Heart right ventricle (tissue), 16 donors: ENCODE measurements at regions of chr12 and their contacts with region 1.

Region 1: DNA sequence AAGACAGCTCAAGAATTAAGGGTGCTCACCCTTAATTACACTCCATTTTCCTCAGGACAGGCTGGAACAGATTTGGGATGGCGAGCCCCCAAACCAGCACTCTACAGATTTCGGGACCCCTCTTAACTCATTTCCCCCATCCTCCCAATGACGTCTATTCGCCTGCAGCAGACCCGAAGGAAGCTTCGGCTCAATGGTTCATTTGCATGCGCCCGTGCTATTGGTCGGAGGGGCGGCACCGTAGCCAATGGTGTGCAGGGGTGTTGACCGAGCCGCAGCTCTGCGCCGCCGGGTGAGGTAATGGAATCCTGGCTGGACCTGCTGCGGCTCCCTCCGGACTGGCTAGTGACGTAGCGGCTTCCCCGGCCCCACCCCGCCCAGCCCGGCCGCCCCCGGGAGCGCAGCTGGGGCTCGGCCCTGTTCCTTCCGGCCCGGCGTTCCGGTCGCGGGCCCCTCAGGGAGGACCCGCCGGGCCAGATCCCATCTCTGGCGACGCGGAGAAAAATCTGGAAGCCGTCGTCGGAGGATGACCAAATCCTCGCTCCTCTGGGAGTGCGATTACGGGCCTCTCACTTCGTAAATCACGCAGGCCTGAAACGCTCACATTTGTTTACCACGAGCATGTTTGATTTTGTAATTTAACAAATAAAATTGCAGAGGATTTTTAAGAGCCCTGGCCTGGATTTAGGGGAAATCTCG is 18.3 kb upstream of the NR4A1 start:
- DNase-seq: peak; percentile 97 to 99
- ATAC-seq: peak; percentile 90 to 95 (median 93)
- H3K4me3 ChIP-seq: peak overlapping the region in 9 of 10 donors; percentile 14 to 52 (median 36)
- H3K27ac ChIP-seq: peak overlapping the region; percentile 84 to 95 (median 89)
- H3K4me1 ChIP-seq: peaks cover 24 to 70% (median 49%) of the 10 kb centered on the region in 9 donors
- H3K27me3 ChIP-seq: peaks cover 0 to 5% (median 0%) of the 10 kb centered on the region in 7 donors
- CTCF ChIP-seq: no peak

Region 2: GRCh38 chr12:51759175-51759574 is 273.8 kb before region 1 on chr12:
- intact Hi-C with region 1: no loop called
- DNase-seq: no peak
- ATAC-seq: no peak
- H3K4me3 ChIP-seq: no peak overlapping the region
- H3K27ac ChIP-seq: no peak overlapping the region
- H3K4me1 ChIP-seq: no peaks in the 10 kb centered on the region
- H3K27me3 ChIP-seq: no peaks in the 10 kb centered on the region
- CTCF ChIP-seq: no peak

Region 3: GRCh38 chr12:51913071-51913480 is 119.9 kb before region 1 on chr12:
- intact Hi-C with region 1: no loop called
- DNase-seq: no peak
- ATAC-seq: no peak
- H3K4me3 ChIP-seq: peak overlapping the region in 6 of 10 donors; percentile 23 to 47 (median 40)
- H3K27ac ChIP-seq: peak overlapping the region in 8 of 10 donors; percentile 46 to 98 (median 88)
- H3K4me1 ChIP-seq: peaks cover 20 to 91% (median 65%) of the 10 kb centered on the region in 9 donors
- H3K27me3 ChIP-seq: peaks cover 0 to 7% (median 0%) of the 10 kb centered on the region in 7 donors
- CTCF ChIP-seq: peak in 2 of 9 donors; percentile 5 to 13

Region 4: GRCh38 chr12:52050761-52051541 is 18.0 kb after region 1 on chr12 and contains the start of gene NR4A1:
- intact Hi-C with region 1: loop called in 3 of 10 experiments (anchors 2 kb)
- DNase-seq: peak; percentile 99
- ATAC-seq: peak; percentile 70 to 92 (median 86)
- H3K4me3 ChIP-seq: peak within 1 kb of the TSS; percentile 38 to 77 (median 66)
- H3K27ac ChIP-seq: peak within 1 kb of the TSS; percentile 88 to 98 (median 96)
- H3K4me1 ChIP-seq: peaks cover 31 to 87% (median 60%) of the 10 kb centered on the region in 9 donors
- H3K27me3 ChIP-seq: peaks cover 0 to 5% (median 0%) of the 10 kb centered on the region in 7 donors
- CTCF ChIP-seq: peak in 8 of 9 donors; percentile 9 to 69 (median 34)
- total RNA-seq, gene NR4A1: 34.6 to 588 (median 105) TPM

Region 5: DNA sequence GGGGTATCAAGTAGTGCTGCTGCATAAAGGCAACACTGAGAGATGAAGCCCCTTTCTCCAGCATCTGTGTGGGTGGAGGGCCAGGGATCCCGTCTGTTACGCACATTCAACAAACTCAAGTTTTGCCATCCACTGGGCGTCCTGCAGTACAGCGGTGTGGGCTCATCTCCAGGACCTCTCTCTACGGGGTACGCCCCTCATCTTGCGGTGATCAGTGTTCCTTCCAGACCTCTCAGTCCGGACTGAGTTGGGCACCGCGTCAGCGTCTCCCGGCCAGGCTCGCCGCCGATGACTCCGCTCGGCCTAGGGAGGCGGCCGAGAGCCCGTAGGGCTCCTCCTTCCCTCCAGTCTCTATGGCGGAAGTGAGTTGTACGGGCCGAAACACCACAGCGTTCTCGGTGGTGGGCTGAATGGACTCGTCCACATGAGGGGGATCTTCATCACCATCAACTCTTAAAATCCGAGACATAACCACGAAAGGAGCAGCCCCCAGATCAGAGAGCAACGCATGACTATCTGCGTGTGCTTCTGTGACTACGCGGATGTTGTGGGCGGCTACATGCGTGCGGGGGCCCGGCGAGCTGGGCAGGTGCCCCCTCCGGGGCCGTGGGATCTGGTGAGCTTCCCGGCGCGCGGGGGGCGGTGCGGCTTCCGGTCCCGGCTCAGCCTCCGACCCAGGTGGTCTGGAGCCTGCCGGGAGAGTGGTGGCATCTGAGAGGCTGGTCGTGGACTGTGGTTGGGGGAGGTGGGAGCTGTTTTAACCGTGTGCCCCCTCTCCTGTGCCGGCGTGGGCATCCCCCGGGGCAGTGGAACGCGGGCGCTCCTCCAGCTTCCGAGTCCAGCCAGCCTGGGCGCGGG is 36.6 kb after region 1 on chr12 and contains the start of gene ATG101:
- intact Hi-C with region 1: loop called in 3 of 10 experiments (anchors 2 to 5 kb)
- DNase-seq: peak; percentile 88 to 93
- ATAC-seq: peak; percentile 96 to 98 (median 97)
- H3K4me3 ChIP-seq: peak within 1 kb of the TSS; percentile 68 to 98 (median 82)
- H3K27ac ChIP-seq: peak within 1 kb of the TSS; percentile 64 to 96 (median 93)
- H3K4me1 ChIP-seq: peaks cover 12 to 54% (median 33%) of the 10 kb centered on the region in 9 donors
- H3K27me3 ChIP-seq: no peaks in the 10 kb centered on the region
- CTCF ChIP-seq: peak; percentile 49 to 87 (median 67)
- total RNA-seq, gene ATG101: 17.5 to 31.8 (median 22.2) TPM

Region 6: GRCh38 chr12:52074971-52075724 is 42.2 kb after region 1 on chr12:
- intact Hi-C with region 1: loop called in 2 of 10 experiments (anchors 5 kb)
- DNase-seq: no peak
- ATAC-seq: no peak
- H3K4me3 ChIP-seq: no peak overlapping the region
- H3K27ac ChIP-seq: no peak overlapping the region
- H3K4me1 ChIP-seq: peaks cover 12 to 55% (median 34%) of the 10 kb centered on the region in 9 donors
- H3K27me3 ChIP-seq: no peaks in the 10 kb centered on the region
- CTCF ChIP-seq: no peak

Region 7: GRCh38 chr12:52082988-52083637 is 50.2 kb after region 1 on chr12:
- intact Hi-C with region 1: loop called in 2 of 10 experiments (anchors 5 kb)
- DNase-seq: peak; percentile 68 to 72
- ATAC-seq: peak; percentile 25 to 70 (median 50)
- H3K4me3 ChIP-seq: no peak overlapping the region
- H3K27ac ChIP-seq: peak overlapping the region in 9 of 10 donors; percentile 25 to 86 (median 74)
- H3K4me1 ChIP-seq: peaks cover 14 to 38% (median 34%) of the 10 kb centered on the region in 9 donors
- H3K27me3 ChIP-seq: peaks cover 0 to 16% (median 0%) of the 10 kb centered on the region in 7 donors
- CTCF ChIP-seq: peak; percentile 92 to 99 (median 97)

Region 8: GRCh38 chr12:52121824-52122539 is 89.0 kb after region 1 on chr12:
- intact Hi-C with region 1: loop called in 3 of 10 experiments (anchors 2 to 5 kb)
- DNase-seq: peak; percentile 65 to 77
- ATAC-seq: peak in 7 of 8 donors; percentile 13 to 54 (median 28)
- H3K4me3 ChIP-seq: no peak overlapping the region
- H3K27ac ChIP-seq: no peak overlapping the region
- H3K4me1 ChIP-seq: peaks cover 14 to 35% (median 25%) of the 10 kb centered on the region in 9 donors
- H3K27me3 ChIP-seq: peaks cover 0 to 29% (median 14%) of the 10 kb centered on the region in 7 donors
- CTCF ChIP-seq: peak; percentile 67 to 85 (median 81)

Region 9: GRCh38 chr12:52913076-52913821 is 880.3 kb after region 1 on chr12:
- intact Hi-C with region 1: no loop called
- DNase-seq: no peak
- ATAC-seq: peak in 1 of 8 donors; percentile 14
- H3K4me3 ChIP-seq: no peak overlapping the region
- H3K27ac ChIP-seq: no peak overlapping the region
- H3K4me1 ChIP-seq: no peaks in the 10 kb centered on the region
- H3K27me3 ChIP-seq: no peaks in the 10 kb centered on the region
- CTCF ChIP-seq: no peak